HCT116 (cell line): ENCODE measurements at regions of chr1 and their contacts with region 1.

Region 1: DNA sequence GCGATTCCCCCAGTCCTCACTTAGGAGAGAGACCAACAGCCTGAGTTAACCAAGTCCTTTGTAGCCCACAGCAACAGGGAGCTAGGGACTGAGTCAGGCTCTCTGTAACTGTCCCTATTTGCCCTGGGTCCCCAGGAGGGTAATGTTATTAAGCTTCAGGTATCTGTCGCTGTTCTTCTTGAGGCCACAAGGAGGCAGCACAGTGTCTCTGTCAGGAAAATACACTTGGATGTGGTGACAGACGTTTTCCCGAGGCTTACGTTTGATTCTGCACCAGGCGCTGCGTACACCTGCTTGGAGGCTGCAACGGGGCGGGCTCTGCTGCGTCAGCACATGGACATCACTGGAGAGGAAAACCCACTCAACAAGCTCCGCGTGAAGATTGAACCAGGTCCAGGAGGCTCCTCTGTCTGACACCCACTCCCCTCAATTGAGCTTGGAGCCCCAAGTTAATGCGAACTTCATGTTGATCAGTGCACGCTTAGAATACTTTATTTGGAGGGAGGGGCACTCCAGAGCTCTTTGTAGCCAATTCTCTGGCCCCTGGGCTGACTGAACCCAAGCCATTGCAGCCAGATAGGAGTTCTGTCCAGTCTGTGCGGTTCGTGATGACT is 10.7 kb upstream of the ELF3 start:
- DNase-seq: no peak
- ATAC-seq: peak; percentile 89
- H3K4me3 ChIP-seq: no peak overlapping the region
- H3K27ac ChIP-seq: no peak overlapping the region
- H3K4me1 ChIP-seq: no peaks in the 10 kb centered on the region
- H3K27me3 ChIP-seq: no peaks in the 10 kb centered on the region
- CTCF ChIP-seq: peak; percentile 79 to 87 (median 87)
- POLR2A ChIP-seq: no peak
- RAD21 ChIP-seq: peak; percentile 90

Region 2: DNA sequence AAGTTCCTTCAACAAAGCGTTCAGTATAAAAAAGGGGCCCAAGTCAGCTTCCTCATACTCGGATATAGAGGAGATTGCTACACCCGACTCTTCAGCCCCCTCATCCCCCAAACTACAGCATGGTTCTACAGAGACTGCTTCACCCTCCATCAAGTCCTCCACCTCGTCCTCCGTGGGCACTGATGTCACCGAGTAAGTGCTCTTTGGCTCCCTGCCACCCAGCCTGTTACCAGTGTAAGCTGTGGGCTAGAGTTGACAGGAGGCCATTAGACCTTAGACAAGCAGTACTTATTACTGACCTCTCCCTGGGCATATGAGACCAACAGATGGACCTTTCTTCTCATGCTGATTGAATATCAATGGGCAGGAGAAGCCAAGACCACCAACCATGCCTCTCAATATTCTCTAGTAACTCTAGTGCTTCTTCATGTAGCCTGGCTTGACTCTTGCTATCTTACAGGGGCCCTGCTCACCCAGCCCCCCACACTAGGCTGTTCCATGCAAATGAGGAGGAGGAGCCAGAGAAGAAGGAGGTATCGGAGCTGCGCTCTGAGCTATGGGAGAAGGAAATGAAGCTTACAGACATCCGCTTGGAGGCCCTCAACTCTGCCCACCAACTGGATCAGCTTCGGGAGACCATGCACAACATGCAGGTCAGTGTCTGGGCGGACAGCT is 191.6 kb before region 1 on chr1:
- CTCF ChIA-PET with region 1: no interaction called
- POLR2A ChIA-PET with region 1: no interaction called
- RAD21 ChIA-PET with region 1: no interaction called
- intact Hi-C with region 1: no loop called
- DNase-seq: no peak
- ATAC-seq: no peak
- H3K4me3 ChIP-seq: no peak overlapping the region
- H3K27ac ChIP-seq: no peak overlapping the region
- H3K4me1 ChIP-seq: no peaks in the 10 kb centered on the region
- H3K27me3 ChIP-seq: no peaks in the 10 kb centered on the region
- CTCF ChIP-seq: no peak
- POLR2A ChIP-seq: no peak
- RAD21 ChIP-seq: no peak

Region 3: DNA sequence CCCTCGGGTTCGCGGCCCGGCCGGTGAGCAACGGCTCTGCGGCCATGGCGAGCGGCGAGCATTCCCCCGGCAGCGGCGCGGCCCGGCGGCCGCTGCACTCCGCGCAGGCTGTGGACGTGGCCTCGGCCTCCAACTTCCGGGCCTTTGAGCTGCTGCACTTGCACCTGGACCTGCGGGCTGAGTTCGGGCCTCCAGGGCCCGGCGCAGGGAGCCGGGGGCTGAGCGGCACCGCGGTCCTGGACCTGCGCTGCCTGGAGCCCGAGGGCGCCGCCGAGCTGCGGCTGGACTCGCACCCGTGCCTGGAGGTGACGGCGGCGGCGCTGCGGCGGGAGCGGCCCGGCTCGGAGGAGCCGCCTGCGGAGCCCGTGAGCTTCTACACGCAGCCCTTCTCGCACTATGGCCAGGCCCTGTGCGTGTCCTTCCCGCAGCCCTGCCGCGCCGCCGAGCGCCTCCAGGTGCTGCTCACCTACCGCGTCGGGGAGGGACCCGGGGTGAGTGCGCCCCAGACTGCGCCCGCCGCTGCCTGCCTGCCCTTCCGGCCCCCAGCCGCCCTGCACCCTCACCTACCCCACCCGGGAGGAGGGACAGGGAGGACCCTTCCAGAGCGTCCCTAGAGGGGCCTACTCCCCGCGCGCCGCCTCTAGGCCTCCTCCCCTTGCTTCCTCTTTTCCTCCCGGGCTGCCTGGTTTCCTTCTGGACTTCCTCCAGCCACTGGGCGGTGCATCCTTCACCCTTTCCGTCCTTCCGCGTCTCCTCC is 16.9 kb before region 1 on chr1 and contains the start of gene RNPEP:
- CTCF ChIA-PET with region 1: interaction called, 19 read pairs
- POLR2A ChIA-PET with region 1: no interaction called
- RAD21 ChIA-PET with region 1: no interaction called
- intact Hi-C with region 1: no loop called
- DNase-seq: peak; percentile 51
- ATAC-seq: peak; percentile 81
- H3K4me3 ChIP-seq: peak within 1 kb of the TSS; percentile 89 to 98
- H3K27ac ChIP-seq: peak within 1 kb of the TSS; percentile 90
- H3K4me1 ChIP-seq: peaks cover 5 to 23% of the 10 kb centered on the region in 2 experiments
- H3K27me3 ChIP-seq: no peaks in the 10 kb centered on the region
- CTCF ChIP-seq: 0 out of 6 replicates have a peak, but pooled peaks of 1 of the 3 experiments have one; percentile 5
- POLR2A ChIP-seq: peak; percentile 40
- RAD21 ChIP-seq: peak; percentile 15; the same call in 1 of the 2 replicates
- total RNA-seq, gene RNPEP: 85.9 TPM

Region 4: GRCh38 chr1:202105539-202106276 is 106.0 kb after region 1 on chr1:
- CTCF ChIA-PET with region 1: interaction called, 11 read pairs
- POLR2A ChIA-PET with region 1: no interaction called
- RAD21 ChIA-PET with region 1: no interaction called
- intact Hi-C with region 1: no loop called
- DNase-seq: peak; percentile 88
- ATAC-seq: peak; percentile 83
- H3K4me3 ChIP-seq: peak overlapping the region; percentile 22 to 40
- H3K27ac ChIP-seq: peak overlapping the region; percentile 86
- H3K4me1 ChIP-seq: peaks cover 58 to 71% of the 10 kb centered on the region in 2 experiments
- H3K27me3 ChIP-seq: no peaks in the 10 kb centered on the region
- CTCF ChIP-seq: no peak
- POLR2A ChIP-seq: no peak
- RAD21 ChIP-seq: no peak

Region 5: DNA sequence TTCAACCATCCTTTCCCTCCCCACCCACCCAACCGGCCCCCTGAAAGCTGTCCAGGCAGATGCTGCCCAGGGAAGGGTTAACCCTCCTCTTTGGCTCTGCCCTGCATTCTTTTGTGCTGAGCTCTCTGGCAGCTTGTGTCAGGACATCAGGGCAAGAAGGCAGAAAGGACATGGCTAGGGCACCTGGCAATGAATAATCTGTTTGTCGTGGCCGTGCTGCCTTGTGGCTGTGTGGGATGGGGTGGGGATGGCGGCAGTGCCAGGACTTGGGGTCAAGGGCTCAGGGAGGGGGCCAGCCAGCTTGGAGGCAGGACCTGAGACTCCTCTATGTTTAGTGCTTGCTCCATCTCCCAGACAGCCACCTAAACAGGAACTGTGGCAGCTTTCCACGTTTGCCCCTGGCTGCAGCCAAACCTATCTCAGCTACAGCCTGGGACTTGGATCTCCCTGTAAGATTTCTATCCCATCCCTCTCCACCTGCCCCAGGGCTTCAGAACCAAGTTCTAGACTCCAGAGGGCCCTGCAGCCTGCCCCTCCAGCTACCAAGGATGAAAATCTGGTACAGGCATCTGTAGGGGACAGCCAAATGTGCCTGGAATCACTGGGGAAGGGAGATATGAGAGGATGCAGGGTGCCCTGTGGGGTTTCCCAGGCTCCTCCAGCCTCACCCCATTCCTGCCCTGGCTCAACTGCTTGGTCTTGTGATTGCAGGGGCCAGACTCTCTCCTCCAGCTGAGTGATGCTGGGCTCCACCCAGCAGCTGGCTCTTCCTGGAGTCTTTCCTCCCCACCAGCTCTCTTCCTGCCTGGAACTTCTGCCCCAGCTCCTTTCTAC is 113.3 kb after region 1 on chr1:
- CTCF ChIA-PET with region 1: interaction called, 59 read pairs
- POLR2A ChIA-PET with region 1: no interaction called
- RAD21 ChIA-PET with region 1: interaction called, 3 to 8 read pairs
- intact Hi-C with region 1: no loop called
- DNase-seq: no peak
- ATAC-seq: peak; percentile 41
- H3K4me3 ChIP-seq: no peak overlapping the region
- H3K27ac ChIP-seq: no peak overlapping the region
- H3K4me1 ChIP-seq: peaks cover 38 to 47% of the 10 kb centered on the region in 2 experiments
- H3K27me3 ChIP-seq: no peaks in the 10 kb centered on the region
- CTCF ChIP-seq: no peak
- POLR2A ChIP-seq: no peak
- RAD21 ChIP-seq: no peak

Region 6: GRCh38 chr1:202122639-202123335 is 123.1 kb after region 1 on chr1 and contains the start of gene GPR37L1:
- CTCF ChIA-PET with region 1: interaction called, 59 read pairs
- POLR2A ChIA-PET with region 1: no interaction called
- RAD21 ChIA-PET with region 1: interaction called, 3 to 10 read pairs
- intact Hi-C with region 1: loop called (anchors 1 kb)
- DNase-seq: no peak
- ATAC-seq: peak; percentile 70
- H3K4me3 ChIP-seq: no peak within 1 kb of the TSS
- H3K27ac ChIP-seq: no peak within 1 kb of the TSS
- H3K4me1 ChIP-seq: peaks cover 10 to 20% of the 10 kb centered on the region in 2 experiments
- H3K27me3 ChIP-seq: no peaks in the 10 kb centered on the region; the same call in 1 of the 2 replicates
- CTCF ChIP-seq: peak; percentile 52 to 67 (median 66); a peak in 5 of 6 replicates
- POLR2A ChIP-seq: no peak
- RAD21 ChIP-seq: no peak; the same call in 1 of the 2 replicates
- total RNA-seq, gene GPR37L1: 0.10 TPM

Region 7: DNA sequence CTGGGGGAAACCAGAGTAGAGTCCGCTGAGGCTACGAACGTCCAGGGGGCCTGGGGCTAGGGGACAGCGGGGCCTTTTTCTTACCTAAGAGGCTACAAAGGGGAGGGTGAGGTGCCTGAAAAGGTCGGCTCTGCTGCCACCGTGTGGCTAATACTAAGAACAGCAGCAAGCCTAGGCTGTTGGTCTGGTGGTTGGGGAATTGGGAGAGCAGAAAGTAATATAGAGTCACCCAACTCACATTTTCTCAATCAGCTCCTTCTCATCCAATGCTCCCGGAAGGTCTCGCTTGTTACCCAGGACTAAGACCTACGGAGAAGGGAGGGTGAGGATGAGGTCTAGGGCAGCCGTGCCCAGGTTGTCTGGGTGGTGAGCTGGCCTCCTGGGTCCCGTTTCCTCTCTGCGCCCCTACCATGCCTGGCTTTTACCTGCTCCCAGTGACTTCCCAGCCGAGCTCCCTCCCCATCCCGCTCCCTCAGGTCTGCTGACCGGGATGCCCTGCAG is 135.5 kb after region 1 on chr1:
- CTCF ChIA-PET with region 1: interaction called, 11 read pairs
- POLR2A ChIA-PET with region 1: no interaction called
- RAD21 ChIA-PET with region 1: no interaction called
- intact Hi-C with region 1: loop called (anchors 1 kb)
- DNase-seq: peak; percentile 24
- ATAC-seq: peak; percentile 92
- H3K4me3 ChIP-seq: no peak overlapping the region
- H3K27ac ChIP-seq: 0 out of 2 replicates have a peak overlapping the region, but pooled peaks have one; percentile 17
- H3K4me1 ChIP-seq: no peaks in the 10 kb centered on the region
- H3K27me3 ChIP-seq: no peaks in the 10 kb centered on the region
- CTCF ChIP-seq: peak; percentile 68 to 89 (median 87); a peak in 5 of 6 replicates
- POLR2A ChIP-seq: no peak
- RAD21 ChIP-seq: peak; percentile 78